HEK293 (cell line): ENCODE measurements at regions of chr2 and their contacts with region 1.

Region 1: DNA sequence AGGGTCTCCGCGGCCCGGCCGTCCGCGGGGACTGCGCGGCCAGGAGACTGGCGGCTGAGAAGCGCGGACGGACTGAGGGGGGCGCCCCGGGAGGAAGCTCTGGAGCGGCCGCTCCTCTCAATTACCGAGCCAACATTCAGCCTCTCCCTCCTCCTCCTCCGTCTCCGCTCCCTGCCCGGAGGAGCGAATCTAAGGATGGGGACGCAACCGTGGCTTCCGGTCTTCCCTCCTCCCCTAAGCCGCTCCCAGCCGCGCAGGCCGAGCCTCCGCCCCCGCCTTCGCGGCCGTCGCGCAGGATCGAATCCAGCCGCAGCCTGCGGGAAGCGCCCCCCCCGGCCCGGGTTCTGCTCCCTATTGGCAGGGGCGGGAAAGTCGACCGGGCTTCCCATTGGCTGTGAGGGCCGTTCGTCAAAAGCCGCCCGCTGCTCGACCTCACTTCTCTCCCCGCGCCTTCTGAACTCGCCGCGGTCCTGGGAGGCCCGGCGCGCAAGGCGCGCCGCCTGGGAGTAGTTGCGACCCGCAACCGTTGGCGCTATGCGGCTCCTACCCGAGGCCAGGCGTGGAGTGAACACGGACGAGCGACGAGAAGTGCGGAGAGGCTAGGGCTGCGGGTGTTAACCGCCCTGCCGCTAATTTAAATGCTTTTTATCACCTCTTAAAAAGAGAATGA is at the start of gene HNRNPLL:
- H3K4me3 ChIP-seq: peak within 1 kb of the TSS; percentile 87
- H3K27ac ChIP-seq: peak within 1 kb of the TSS; percentile 97
- H3K4me1 ChIP-seq: peaks cover 23% of the 10 kb centered on the region; the same call in 1 of the 2 replicates
- CTCF ChIP-seq: peak; percentile 17; the same call in 1 of the 2 replicates

Region 2: GRCh38 chr2:38498045-38498481 is 104.8 kb before region 1 on chr2:
- CTCF ChIA-PET with region 1: no interaction called
- POLR2A ChIA-PET with region 1: no interaction called
- H3K4me3 ChIP-seq: no peak overlapping the region
- H3K27ac ChIP-seq: no peak overlapping the region
- H3K4me1 ChIP-seq: peaks cover 2% of the 10 kb centered on the region; the same call in 1 of the 2 replicates
- CTCF ChIP-seq: no peak

Region 3: GRCh38 chr2:38572167-38572566 is 30.7 kb before region 1 on chr2:
- CTCF ChIA-PET with region 1: no interaction called
- POLR2A ChIA-PET with region 1: no interaction called
- H3K4me3 ChIP-seq: no peak overlapping the region
- H3K27ac ChIP-seq: no peak overlapping the region
- H3K4me1 ChIP-seq: peaks cover 5% of the 10 kb centered on the region; the same call in 1 of the 2 replicates
- CTCF ChIP-seq: no peak

Region 4: GRCh38 chr2:38613126-38613848 is 10.4 kb after region 1 on chr2:
- CTCF ChIA-PET with region 1: interaction called, 13 read pairs
- POLR2A ChIA-PET with region 1: interaction called, 8 read pairs
- H3K4me3 ChIP-seq: no peak overlapping the region
- H3K27ac ChIP-seq: no peak overlapping the region
- H3K4me1 ChIP-seq: no peaks in the 10 kb centered on the region; the same call in 1 of the 2 replicates
- CTCF ChIP-seq: no peak

Region 5: DNA sequence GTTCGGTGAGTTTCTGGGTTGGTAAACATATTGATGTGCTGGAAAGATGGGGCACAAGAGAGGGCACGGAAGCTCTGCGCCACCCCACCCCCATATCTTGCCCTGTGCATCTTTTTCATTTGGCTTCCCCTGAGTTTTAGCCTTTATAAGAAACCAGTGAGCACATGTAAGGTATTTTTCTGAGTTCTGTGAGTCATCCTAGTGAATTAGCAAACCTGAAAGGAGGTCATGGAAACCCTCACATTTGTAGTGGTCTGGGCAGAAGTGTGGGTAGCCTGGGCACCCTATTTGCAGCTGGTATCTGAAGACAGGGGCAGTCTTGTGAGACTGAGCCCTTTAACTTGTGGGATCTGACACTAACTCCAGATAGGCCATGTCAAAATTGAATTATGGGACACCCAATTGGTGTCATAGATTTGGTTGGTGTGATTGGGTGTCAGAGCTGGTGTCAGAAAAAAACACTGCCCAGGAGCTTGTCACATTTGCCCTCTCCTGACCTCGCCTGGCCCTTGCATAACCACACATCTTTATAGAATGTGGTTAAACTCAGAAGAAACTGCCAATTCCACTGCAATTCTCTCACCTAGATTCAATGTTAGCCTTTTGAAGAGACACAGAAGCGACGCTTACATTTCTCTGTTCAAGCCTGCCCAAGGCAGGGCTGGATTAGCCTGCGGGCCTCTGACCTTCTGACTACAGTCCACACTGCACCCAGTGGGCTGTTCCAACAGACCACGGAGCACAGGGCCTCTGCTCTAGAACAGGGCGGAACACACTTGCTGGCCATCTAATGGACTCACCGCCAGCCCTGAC is 51.1 kb after region 1 on chr2:
- CTCF ChIA-PET with region 1: interaction called, 11 read pairs
- POLR2A ChIA-PET with region 1: no interaction called
- H3K4me3 ChIP-seq: no peak overlapping the region
- H3K27ac ChIP-seq: no peak overlapping the region
- H3K4me1 ChIP-seq: no peaks in the 10 kb centered on the region
- CTCF ChIP-seq: no peak